H1 (cell line): ENCODE measurements at regions of chr11 and their contacts with region 1.

Region 1: DNA sequence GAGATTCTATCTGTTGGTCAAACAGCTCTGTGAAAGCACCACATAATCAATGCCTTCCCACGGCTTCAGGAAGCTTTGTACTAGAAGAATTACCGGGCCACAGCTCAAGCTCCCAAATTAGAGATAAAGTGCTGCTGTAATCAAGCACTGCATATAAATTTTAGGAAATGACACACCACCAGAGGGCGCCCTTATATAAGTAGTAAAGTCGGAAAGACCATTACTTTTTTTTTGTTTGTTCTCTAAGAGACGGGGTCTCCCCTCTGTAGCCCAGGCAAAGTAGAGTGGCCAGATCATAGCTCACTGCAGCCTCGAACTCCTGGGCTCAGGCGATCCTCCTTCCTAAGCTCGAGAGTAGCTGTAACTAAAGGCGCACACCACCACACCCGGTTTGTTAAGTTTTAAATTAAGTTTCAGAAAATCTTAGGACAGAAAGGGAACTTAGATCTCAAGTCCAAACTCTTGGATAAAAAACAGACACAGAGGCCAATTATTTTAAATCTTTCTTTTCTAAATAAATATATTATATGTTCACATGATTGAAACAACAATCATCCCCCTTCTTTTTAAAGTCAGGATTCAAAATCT is 32.6 kb downstream of the PRCP start:
- DNase-seq: peak; percentile 9 to 83
- H3K4me3 ChIP-seq: no peak overlapping the region
- H3K27ac ChIP-seq: no peak overlapping the region
- H3K4me1 ChIP-seq: peaks cover 0 to 3% (median 0%) of the 10 kb centered on the region in 4 experiments; a peak in 1 of 7 replicates
- H3K27me3 ChIP-seq: no peaks in the 10 kb centered on the region
- CTCF ChIP-seq: peak in 2 of 3 experiments; percentile 58 to 66; a peak in 3 of 4 replicates
- EP300 ChIP-seq: no peak
- POLR2A ChIP-seq: no peak
- RAD21 ChIP-seq: peak; percentile 75 to 84

Region 2: DNA sequence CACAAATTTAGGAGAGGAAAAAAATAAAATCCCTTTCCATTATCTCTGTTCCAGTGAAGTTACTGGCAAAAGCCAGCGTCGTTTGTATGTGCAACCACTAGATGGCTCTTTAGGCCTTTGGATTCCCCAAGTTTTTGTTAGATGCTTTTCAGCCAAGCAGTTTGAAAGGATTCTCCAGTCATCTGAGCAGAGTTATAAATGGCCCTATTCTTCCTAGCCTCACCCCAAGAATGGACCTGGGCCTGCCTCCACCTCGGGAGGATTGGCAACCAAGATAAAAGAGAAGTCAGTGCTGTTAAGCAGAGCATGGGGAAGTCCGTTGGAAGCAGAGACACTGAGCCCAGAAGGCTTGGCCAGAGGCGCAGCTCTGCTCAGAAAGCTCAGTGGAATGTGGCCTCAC is 149.3 kb before region 1 on chr11:
- CTCF ChIA-PET with region 1: interaction called, 26 read pairs
- POLR2A ChIA-PET with region 1: no interaction called
- DNase-seq: peak in 1 of 2 experiments; percentile 54
- H3K4me3 ChIP-seq: no peak overlapping the region
- H3K27ac ChIP-seq: no peak overlapping the region
- H3K4me1 ChIP-seq: no peaks in the 10 kb centered on the region; a peak in 1 of 7 replicates
- H3K27me3 ChIP-seq: no peaks in the 10 kb centered on the region
- CTCF ChIP-seq: peak in 2 of 3 experiments; percentile 76 to 80; a peak in 3 of 4 replicates
- EP300 ChIP-seq: no peak
- POLR2A ChIP-seq: no peak
- RAD21 ChIP-seq: peak; percentile 79 to 87

Region 3: DNA sequence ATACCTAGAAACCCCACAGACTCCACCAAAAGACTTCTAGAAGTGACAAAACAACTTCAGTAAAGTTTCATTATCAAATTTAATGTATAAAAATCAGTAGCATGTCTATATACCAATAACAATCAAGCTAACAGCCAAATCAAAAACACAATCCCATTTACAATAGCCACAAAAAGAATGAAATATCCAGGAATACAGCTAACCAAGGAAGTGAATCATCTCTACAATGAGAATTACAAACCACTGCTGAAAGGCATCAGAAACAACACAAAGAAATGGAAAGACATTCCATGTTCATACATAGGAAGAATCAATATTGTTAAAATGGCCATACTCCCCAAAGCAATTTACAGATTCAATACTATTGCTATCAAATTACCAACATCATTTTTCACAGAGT is 13.3 kb before region 1 on chr11:
- CTCF ChIA-PET with region 1: interaction called, 16 read pairs
- POLR2A ChIA-PET with region 1: no interaction called
- DNase-seq: no peak
- H3K4me3 ChIP-seq: no peak overlapping the region
- H3K27ac ChIP-seq: no peak overlapping the region
- H3K4me1 ChIP-seq: no peaks in the 10 kb centered on the region
- H3K27me3 ChIP-seq: no peaks in the 10 kb centered on the region
- CTCF ChIP-seq: no peak
- EP300 ChIP-seq: no peak
- POLR2A ChIP-seq: no peak
- RAD21 ChIP-seq: no peak

Region 4: GRCh38 chr11:82889133-82890001 is 21.8 kb after region 1 on chr11:
- CTCF ChIA-PET with region 1: interaction called, 10 read pairs
- POLR2A ChIA-PET with region 1: no interaction called
- DNase-seq: no peak
- H3K4me3 ChIP-seq: no peak overlapping the region
- H3K27ac ChIP-seq: no peak overlapping the region
- H3K4me1 ChIP-seq: no peaks in the 10 kb centered on the region
- H3K27me3 ChIP-seq: no peaks in the 10 kb centered on the region
- CTCF ChIP-seq: no peak
- EP300 ChIP-seq: no peak
- POLR2A ChIP-seq: no peak
- RAD21 ChIP-seq: no peak

Region 5: GRCh38 chr11:82927254-82927880 is 59.8 kb after region 1 on chr11:
- CTCF ChIA-PET with region 1: interaction called, 10 read pairs
- POLR2A ChIA-PET with region 1: no interaction called
- DNase-seq: no peak
- H3K4me3 ChIP-seq: no peak overlapping the region
- H3K27ac ChIP-seq: no peak overlapping the region
- H3K4me1 ChIP-seq: no peaks in the 10 kb centered on the region
- H3K27me3 ChIP-seq: no peaks in the 10 kb centered on the region
- CTCF ChIP-seq: peak in 2 of 3 experiments; percentile 58 to 61; a peak in 2 of 4 replicates
- EP300 ChIP-seq: no peak
- POLR2A ChIP-seq: no peak
- RAD21 ChIP-seq: peak; percentile 50 to 59